PC-9 (cell line): ENCODE measurements at regions of chr6 and their contacts with region 1.

Region 1: GRCh38 chr6:2848851-2849250 is 7.2 kb upstream of the SERPINB1 start:
- DNase-seq: no peak
- H3K4me3 ChIP-seq: no peak overlapping the region
- H3K27ac ChIP-seq: no peak overlapping the region
- H3K4me1 ChIP-seq: peaks cover 29% of the 10 kb centered on the region
- H3K27me3 ChIP-seq: no peaks in the 10 kb centered on the region
- CTCF ChIP-seq: no peak

Region 2: DNA sequence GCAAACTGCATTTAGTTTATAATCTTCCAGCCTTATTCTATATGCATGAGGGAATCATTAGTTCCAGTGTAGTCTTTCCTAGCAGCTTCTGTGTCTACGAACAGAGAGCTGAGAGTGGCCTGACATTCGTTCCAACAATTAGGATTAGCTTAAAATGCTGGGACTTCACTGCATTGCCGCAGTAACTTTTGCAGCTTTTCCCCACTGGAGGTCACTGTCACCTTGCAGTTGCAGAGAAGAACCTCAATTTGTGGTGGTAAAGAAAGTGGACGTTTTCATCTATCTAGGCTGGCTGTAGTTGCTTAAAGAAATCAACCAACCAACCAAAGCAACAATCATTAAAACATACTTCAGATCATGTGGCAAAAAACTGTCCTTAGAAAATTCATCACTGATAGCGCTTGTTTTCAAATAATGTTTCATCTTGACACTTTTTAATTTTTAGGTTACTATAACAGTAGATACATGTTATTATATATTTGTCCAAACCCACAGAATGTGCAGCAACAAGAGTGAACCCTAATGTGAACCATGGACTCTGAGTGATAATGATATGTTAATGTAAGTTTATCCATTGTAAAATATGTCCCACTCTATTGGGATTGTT is 110.4 kb before region 1 on chr6:
- CTCF ChIA-PET with region 1: interaction called, 3 read pairs
- POLR2A ChIA-PET with region 1: interaction called, 3 read pairs
- intact Hi-C with region 1: loop called (anchors 1 kb)
- DNase-seq: peak; percentile 38 to 53
- H3K4me3 ChIP-seq: no peak overlapping the region
- H3K27ac ChIP-seq: no peak overlapping the region
- H3K4me1 ChIP-seq: no peaks in the 10 kb centered on the region
- H3K27me3 ChIP-seq: no peaks in the 10 kb centered on the region
- CTCF ChIP-seq: peak; percentile 72

Region 3: GRCh38 chr6:2876210-2877056 is 27.6 kb after region 1 on chr6:
- CTCF ChIA-PET with region 1: interaction called, 5 read pairs
- POLR2A ChIA-PET with region 1: interaction called, 11 read pairs
- intact Hi-C with region 1: loop called (anchors 1 kb)
- DNase-seq: peak; percentile 63 to 92
- H3K4me3 ChIP-seq: peak overlapping the region; percentile 49; the same call in 1 of the 2 replicates
- H3K27ac ChIP-seq: peak overlapping the region; percentile 99
- H3K4me1 ChIP-seq: peaks cover 30% of the 10 kb centered on the region
- H3K27me3 ChIP-seq: no peaks in the 10 kb centered on the region
- CTCF ChIP-seq: no peak

Region 4: GRCh38 chr6:2911171-2911570 is 62.3 kb after region 1 on chr6:
- CTCF ChIA-PET with region 1: interaction called, 4 read pairs
- POLR2A ChIA-PET with region 1: interaction called, 4 read pairs
- intact Hi-C with region 1: loop called (anchors 1 kb)
- DNase-seq: no peak
- H3K4me3 ChIP-seq: no peak overlapping the region
- H3K27ac ChIP-seq: no peak overlapping the region
- H3K4me1 ChIP-seq: no peaks in the 10 kb centered on the region
- H3K27me3 ChIP-seq: no peaks in the 10 kb centered on the region
- CTCF ChIP-seq: no peak

Region 5: DNA sequence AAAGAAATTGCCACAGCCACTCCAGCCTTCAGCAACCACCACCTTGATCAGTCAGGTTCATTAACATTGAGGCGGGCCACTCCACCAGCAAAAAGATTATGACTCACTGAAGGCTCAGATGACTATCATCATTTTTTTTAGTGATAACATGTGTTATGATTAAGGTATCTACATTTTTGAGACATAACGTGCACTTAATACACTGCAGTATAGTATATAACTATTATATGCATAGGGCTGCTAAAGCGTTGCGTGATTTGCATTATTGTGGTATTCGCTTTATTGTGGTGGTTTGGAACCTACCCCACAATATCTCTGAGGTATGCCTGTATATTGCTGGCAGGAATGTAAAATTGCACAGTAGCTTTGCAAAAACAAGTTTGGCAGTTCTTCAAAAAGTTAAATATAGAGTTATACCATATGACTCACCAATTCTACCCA is 212.7 kb after region 1 on chr6:
- CTCF ChIA-PET with region 1: no interaction called
- POLR2A ChIA-PET with region 1: interaction called, 4 read pairs
- intact Hi-C with region 1: loop called (anchors 5 kb)
- DNase-seq: peak; percentile 68 to 92
- H3K4me3 ChIP-seq: no peak overlapping the region; the same call in 1 of the 2 replicates
- H3K27ac ChIP-seq: peak overlapping the region; percentile 42; the same call in 1 of the 2 replicates
- H3K4me1 ChIP-seq: peaks cover 13% of the 10 kb centered on the region
- H3K27me3 ChIP-seq: no peaks in the 10 kb centered on the region
- CTCF ChIP-seq: no peak